Activated T-helper 2 cell treated with anti-CD3 and anti-CD28 coated beads, Interferon-gamma antibody, Interleukin-2, Interleukin-4, amounts not matched to agents 10 μg/mL and 5 μg/mL and 100 μg/mL, durations not matched to agents 14 hours and 24 hours and 36 hours (primary cell): ENCODE measurements at regions of chr9 and their contacts with region 1.

Region 1: DNA sequence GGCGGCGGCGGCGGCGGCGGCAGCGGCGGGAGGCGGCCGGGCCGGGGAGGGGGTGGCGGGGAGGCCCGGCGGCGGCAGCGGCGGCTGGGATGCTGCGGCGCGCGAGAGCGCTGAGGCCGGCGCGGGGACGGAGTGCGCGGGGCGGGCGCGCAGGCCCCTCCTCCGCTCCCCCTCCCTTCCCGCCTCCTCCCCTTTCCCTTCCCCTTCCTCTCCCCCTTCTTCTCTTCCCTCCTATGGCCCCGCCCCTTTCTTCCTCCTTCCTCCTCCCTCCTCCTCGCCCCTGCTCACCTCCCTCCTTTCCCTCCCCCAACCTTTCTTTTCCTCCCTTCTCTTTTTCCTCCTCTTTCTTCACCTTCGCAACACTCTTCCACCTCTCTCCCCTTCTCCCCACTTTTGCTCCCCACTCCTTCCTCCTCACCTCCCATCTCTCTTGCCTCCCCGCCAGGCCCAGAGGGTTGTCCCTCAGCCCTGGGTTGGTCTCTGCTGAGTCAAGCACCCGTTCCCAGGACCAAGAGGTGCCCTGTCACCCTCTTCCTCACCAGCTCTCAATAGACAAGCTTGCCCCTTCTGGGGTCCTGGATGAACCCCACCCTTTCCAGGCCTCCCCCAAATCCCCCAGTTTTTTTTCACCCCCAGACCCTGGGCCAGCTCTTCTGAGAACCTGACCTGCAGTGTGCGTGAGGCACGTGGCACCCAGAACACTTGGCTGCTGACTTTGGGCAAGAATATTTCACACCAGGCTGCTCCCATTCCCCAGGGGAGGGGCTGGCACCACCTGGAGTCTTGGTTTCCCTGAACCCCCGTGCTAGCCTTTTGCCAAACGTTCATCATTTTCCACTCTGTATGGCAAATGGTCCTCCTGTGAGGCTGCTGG is at the start of gene SEMA4D:
- DNase-seq: peak; percentile 55
- H3K4me3 Mint-ChIP-seq: peak within 1 kb of the TSS; percentile 87
- H3K27ac Mint-ChIP-seq: peak within 1 kb of the TSS; percentile 86
- H3K4me1 Mint-ChIP-seq: peaks cover 78% of the 10 kb centered on the region
- H3K27me3 Mint-ChIP-seq: no peaks in the 10 kb centered on the region
- total RNA-seq, gene SEMA4D: 317 and 330 TPM in 2 replicates

Region 2: DNA sequence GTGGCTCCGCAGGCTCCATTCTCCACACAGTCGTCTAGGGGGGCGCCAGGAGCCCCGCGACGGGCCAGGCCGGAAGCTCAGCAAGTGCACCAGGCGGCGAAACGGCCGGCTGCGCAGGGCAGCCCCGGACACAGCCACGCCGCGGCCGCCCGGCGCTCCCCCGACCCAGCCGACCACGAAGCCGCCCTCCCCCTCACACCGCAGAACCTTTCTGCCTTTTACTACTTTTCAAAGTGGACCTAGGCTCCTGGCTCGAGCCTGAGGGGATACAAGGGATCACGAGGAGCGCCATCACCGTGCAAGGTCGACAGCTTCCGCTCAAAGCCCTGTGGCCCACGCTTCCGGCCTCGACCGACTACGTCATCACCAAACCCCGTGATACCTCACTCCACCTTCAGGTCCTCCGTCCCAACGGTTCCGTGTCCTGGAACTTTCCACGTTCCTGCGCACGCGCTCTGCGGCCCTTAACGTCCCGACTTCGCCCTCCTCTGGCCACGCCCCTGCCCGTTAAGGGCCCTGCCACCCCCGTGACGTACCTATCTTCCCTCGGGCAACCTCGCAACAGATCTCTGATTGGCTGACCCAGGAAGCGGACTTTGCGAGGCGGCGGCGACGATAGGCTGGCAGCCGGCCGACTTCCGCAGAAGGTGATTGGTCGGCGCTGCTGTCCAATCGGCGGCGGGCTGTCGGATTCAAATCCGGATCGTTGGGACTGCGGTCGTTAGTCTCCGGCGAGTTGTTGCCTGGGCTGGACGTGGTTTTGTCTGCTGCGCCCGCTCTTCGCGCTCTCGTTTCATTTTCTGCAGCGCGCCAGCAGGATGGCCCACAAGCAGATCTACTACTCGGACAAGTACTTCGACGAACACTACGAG is 187.5 kb before region 1 on chr9 and contains the start of gene CKS2:
- intact Hi-C with region 1: loop called (anchors 2 kb)
- DNase-seq: peak; percentile 100
- H3K4me3 Mint-ChIP-seq: peak within 1 kb of the TSS; percentile 97
- H3K27ac Mint-ChIP-seq: peak within 1 kb of the TSS; percentile 100
- H3K4me1 Mint-ChIP-seq: peaks cover 41% of the 10 kb centered on the region
- H3K27me3 Mint-ChIP-seq: no peaks in the 10 kb centered on the region
- total RNA-seq, gene CKS2: 172 and 177 TPM in 2 replicates

Region 3: GRCh38 chr9:89477811-89478630 is 20.2 kb before region 1 on chr9:
- intact Hi-C with region 1: loop called (anchors 1 kb)
- DNase-seq: peak; percentile 65
- H3K4me3 Mint-ChIP-seq: peak overlapping the region; percentile 83
- H3K27ac Mint-ChIP-seq: peak overlapping the region; percentile 97
- H3K4me1 Mint-ChIP-seq: peaks cover 78% of the 10 kb centered on the region
- H3K27me3 Mint-ChIP-seq: no peaks in the 10 kb centered on the region

Region 4: GRCh38 chr9:89522261-89522958 is 24.2 kb after region 1 on chr9:
- intact Hi-C with region 1: loop called (anchors 1 kb)
- DNase-seq: peak; percentile 82
- H3K4me3 Mint-ChIP-seq: peak overlapping the region; percentile 71
- H3K27ac Mint-ChIP-seq: peak overlapping the region; percentile 100
- H3K4me1 Mint-ChIP-seq: peaks cover 85% of the 10 kb centered on the region
- H3K27me3 Mint-ChIP-seq: no peaks in the 10 kb centered on the region

Region 5: DNA sequence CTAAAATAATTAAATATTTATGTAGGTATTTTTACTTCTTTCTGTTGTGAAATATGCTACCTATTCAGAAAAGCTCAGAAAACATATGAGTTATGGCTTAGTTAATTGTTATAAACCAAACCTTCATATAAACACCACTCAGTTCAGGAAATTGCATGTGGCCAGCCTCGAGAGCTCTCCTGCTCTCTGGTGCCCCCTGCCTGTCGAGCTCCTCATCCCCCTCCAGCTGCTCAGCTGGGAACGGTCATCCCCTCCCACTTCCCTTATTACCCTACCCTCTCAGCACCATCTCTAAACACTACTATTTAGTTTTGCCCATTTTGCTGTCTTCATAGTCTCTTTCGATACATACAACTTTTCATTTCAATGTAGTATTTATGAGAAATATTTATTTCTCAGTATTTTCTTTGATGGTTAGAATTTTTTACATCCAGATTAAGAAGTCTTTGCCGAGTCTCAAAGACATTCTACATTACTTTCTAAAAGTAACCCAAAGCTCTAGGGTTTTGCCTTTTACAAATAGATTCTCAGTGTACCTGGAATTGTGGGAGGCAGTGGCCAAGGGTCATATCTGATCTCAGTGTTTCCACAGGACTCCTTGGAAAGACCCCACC is 50.9 kb after region 1 on chr9:
- intact Hi-C with region 1: loop called (anchors 1 kb)
- DNase-seq: peak; percentile 76
- H3K4me3 Mint-ChIP-seq: no peak overlapping the region
- H3K27ac Mint-ChIP-seq: peak overlapping the region; percentile 5
- H3K4me1 Mint-ChIP-seq: peaks cover 23% of the 10 kb centered on the region
- H3K27me3 Mint-ChIP-seq: peaks cover 7% of the 10 kb centered on the region